Transverse colon (tissue), 4 donors: ENCODE measurements at regions of chr11 and their contacts with region 1.

Region 1: GRCh38 chr11:36289226-36289852 is at the start of gene COMMD9:
- DNase-seq: peak; percentile 96
- H3K4me3 ChIP-seq: peak within 1 kb of the TSS; percentile 53 to 93 (median 57)
- H3K27ac ChIP-seq: peak within 1 kb of the TSS; percentile 54 to 73 (median 68)
- H3K4me1 ChIP-seq: peaks cover 0 to 18% (median 8%) of the 10 kb centered on the region in 4 donors
- H3K27me3 ChIP-seq: no peaks in the 10 kb centered on the region
- CTCF ChIP-seq: no peak
- EP300 ChIP-seq: no peak
- POLR2A ChIP-seq: peak; percentile 61
- total RNA-seq, gene COMMD9: 22.4 to 46.2 (median 33.9) TPM

Region 2: DNA sequence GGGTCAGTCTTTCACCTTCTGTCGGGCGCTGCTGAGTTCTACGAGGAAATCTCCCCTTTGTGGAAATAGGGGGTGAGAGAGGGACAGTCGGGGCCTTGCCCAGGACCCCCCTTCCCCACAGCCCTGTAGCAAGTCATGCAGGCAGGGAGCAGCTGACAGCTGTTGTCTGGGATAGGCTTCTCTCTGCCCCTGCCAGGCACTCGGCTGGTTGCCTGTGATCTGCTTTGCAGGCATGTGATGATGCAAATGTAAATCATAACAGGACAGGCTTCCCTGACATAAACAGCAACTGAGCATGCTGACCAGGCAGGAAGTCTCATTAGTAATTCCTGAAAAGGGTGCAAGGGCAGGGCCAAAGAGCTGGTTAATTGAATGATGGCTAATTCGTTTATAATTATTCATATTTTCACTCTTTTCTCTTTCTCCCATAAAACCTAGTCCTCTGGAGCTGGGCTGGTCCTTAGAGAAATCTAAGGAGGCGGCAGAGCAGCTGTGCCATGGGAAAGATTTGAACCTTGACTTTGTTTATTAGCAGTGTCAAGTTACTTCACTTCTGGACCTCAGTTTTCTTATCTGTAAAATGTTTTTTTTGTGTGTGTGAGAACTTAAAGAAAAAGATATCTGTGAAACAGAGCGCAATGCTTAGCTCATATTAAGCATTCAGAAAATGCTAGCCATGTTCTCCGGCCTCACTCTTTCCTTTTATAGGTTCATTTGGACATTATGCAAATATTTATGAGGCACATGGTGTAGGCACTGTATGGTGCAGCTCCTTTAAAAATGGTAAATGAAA is 215.7 kb before region 1 on chr11:
- in situ Hi-C with region 1: no loop called
- intact Hi-C with region 1: no loop called
- DNase-seq: no peak
- H3K4me3 ChIP-seq: no peak overlapping the region
- H3K27ac ChIP-seq: no peak overlapping the region
- H3K4me1 ChIP-seq: peaks cover 4 to 12% (median 6%) of the 10 kb centered on the region in 4 donors
- H3K27me3 ChIP-seq: no peaks in the 10 kb centered on the region
- CTCF ChIP-seq: no peak
- EP300 ChIP-seq: no peak
- POLR2A ChIP-seq: no peak

Region 3: DNA sequence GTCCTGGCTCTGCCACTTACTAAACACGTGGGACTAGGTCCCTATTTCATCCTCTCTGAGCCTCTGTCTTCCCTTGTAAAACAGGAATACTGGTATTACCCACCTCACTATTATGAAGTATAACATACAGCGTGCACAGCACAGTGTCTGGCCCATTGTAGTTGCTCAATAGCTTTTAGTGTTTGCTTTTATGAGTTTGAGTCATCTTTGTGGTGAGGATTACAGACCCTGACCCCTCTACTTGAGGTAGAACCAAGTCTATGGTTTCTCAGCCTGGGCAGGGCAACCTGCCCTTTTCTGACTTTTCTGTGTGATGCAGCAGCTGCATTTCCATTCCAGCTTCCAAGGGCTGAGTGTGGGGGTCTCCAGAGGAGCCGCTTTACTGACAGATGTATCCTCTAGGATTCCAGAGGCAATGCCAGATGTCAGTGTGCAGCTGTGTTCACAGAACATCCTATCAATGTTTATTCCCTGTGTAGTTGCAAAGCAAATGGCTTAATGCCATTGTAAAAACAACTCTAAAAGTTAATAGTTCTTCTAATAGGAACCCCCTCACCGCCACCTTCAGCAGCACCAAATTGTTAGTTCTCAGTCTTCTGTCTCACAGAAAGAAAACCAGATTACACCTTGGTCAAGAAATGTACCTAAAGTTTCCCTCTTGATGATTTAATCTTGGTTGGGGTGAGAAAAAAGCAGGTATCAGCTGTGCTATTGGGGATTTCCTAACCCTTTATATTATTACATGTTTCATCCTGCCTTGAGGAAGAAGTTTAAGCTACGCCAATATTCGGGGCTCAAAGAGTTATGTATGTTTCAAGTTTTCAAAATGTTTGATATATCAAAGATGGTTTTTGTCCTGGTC is 23.5 kb after region 1 on chr11:
- in situ Hi-C with region 1: no loop called
- intact Hi-C with region 1: no loop called
- DNase-seq: no peak
- H3K4me3 ChIP-seq: no peak overlapping the region
- H3K27ac ChIP-seq: no peak overlapping the region
- H3K4me1 ChIP-seq: peaks cover 3 to 56% (median 23%) of the 10 kb centered on the region in 4 donors
- H3K27me3 ChIP-seq: no peaks in the 10 kb centered on the region
- CTCF ChIP-seq: no peak
- EP300 ChIP-seq: no peak
- POLR2A ChIP-seq: no peak

Region 4: GRCh38 chr11:36376888-36377758 is 87.8 kb after region 1 on chr11:
- in situ Hi-C with region 1: loop called in 1 of 4 experiments (anchors 25 kb)
- intact Hi-C with region 1: no loop called
- DNase-seq: peak; percentile 78
- H3K4me3 ChIP-seq: peak overlapping the region; percentile 60 to 74 (median 64)
- H3K27ac ChIP-seq: peak overlapping the region; percentile 82 to 87 (median 84)
- H3K4me1 ChIP-seq: peaks cover 4 to 54% (median 34%) of the 10 kb centered on the region in 4 donors
- H3K27me3 ChIP-seq: no peaks in the 10 kb centered on the region
- CTCF ChIP-seq: peak; percentile 43 to 74 (median 57)
- EP300 ChIP-seq: no peak
- POLR2A ChIP-seq: peak; percentile 37

Region 5: GRCh38 chr11:36478700-36479329 is 189.5 kb after region 1 on chr11:
- in situ Hi-C with region 1: loop called in 2 of 4 experiments (anchors 10 kb)
- intact Hi-C with region 1: loop called (anchors 10 kb)
- DNase-seq: peak; percentile 30
- H3K4me3 ChIP-seq: no peak overlapping the region
- H3K27ac ChIP-seq: no peak overlapping the region
- H3K4me1 ChIP-seq: peaks cover 0 to 3% (median 0%) of the 10 kb centered on the region in 4 donors
- H3K27me3 ChIP-seq: no peaks in the 10 kb centered on the region
- CTCF ChIP-seq: peak in 4 of 5 experiments; percentile 27 to 44 (median 39)
- EP300 ChIP-seq: no peak
- POLR2A ChIP-seq: no peak

Region 6: DNA sequence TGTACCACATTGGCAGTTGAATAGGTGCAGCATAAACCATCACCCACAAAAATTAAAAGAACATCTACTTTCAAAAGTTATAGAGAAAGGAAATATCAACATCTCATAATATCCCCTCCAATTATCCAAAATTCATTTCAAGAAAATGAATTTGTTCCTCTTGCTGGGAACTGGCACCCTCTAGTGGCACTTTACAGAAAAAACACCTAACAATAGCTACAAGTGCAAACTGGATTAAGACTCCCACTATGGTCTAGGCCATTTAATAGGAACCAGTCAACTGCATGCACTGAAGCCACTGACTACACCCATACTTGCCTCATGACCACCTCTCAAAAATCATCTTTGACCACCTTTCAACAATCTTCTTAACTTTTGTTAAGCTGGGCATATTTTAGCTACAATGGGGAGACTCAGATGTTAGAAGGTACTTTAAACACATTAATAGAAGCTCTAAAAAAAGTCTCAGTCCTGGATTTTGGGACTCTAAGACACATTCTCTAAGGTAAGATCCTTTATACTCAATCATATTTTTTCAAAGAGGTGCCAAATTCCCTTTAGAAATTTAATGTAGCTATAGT is 203.5 kb after region 1 on chr11:
- in situ Hi-C with region 1: loop called in 2 of 4 experiments (anchors 10 kb)
- intact Hi-C with region 1: loop called (anchors 10 kb)
- DNase-seq: no peak
- H3K4me3 ChIP-seq: no peak overlapping the region
- H3K27ac ChIP-seq: no peak overlapping the region
- H3K4me1 ChIP-seq: no peaks in the 10 kb centered on the region
- H3K27me3 ChIP-seq: no peaks in the 10 kb centered on the region
- CTCF ChIP-seq: peak; percentile 58 to 75 (median 72)
- EP300 ChIP-seq: no peak
- POLR2A ChIP-seq: no peak

Region 7: GRCh38 chr11:37108436-37109285 is 819.3 kb after region 1 on chr11:
- in situ Hi-C with region 1: no loop called
- intact Hi-C with region 1: no loop called
- DNase-seq: no peak
- H3K4me3 ChIP-seq: no peak overlapping the region
- H3K27ac ChIP-seq: no peak overlapping the region
- H3K4me1 ChIP-seq: no peaks in the 10 kb centered on the region
- H3K27me3 ChIP-seq: no peaks in the 10 kb centered on the region
- CTCF ChIP-seq: no peak
- EP300 ChIP-seq: no peak
- POLR2A ChIP-seq: no peak